ENCODE measurements at regions of chr2 and their contacts with region 1.

Region 1: GRCh38 chr2:177263451-177264208 is 897 bp downstream of the NFE2L2 start:
- DNase-seq: peak; percentile 95
- ATAC-seq: peak; percentile 68
- H3K4me3 Mint-ChIP-seq: peak overlapping the region; percentile 86
- H3K27ac Mint-ChIP-seq: peak overlapping the region; percentile 100
- H3K4me1 Mint-ChIP-seq: peaks cover 52% of the 10 kb centered on the region
- H3K27me3 Mint-ChIP-seq: no peaks in the 10 kb centered on the region

Region 2: GRCh38 chr2:177212106-177212890 is 51.3 kb before region 1 on chr2 and contains the start of gene HNRNPA3:
- CTCF ChIA-PET with region 1: interaction called, 11 read pairs
- POLR2A ChIA-PET with region 1: interaction called, 84 read pairs
- DNase-seq: peak; percentile 100
- ATAC-seq: peak; percentile 88
- H3K4me3 Mint-ChIP-seq: peak within 1 kb of the TSS; percentile 92
- H3K27ac Mint-ChIP-seq: peak within 1 kb of the TSS; percentile 99
- H3K4me1 Mint-ChIP-seq: peaks cover 42% of the 10 kb centered on the region
- H3K27me3 Mint-ChIP-seq: no peaks in the 10 kb centered on the region
- total RNA-seq, gene HNRNPA3: 329 to 350 TPM

Region 3: GRCh38 chr2:177239932-177240630 is 23.5 kb before region 1 on chr2:
- CTCF ChIA-PET with region 1: interaction called, 44 read pairs
- POLR2A ChIA-PET with region 1: interaction called, 53 read pairs
- DNase-seq: peak; percentile 64
- ATAC-seq: peak; percentile 86
- H3K4me3 Mint-ChIP-seq: peak overlapping the region; percentile 25
- H3K27ac Mint-ChIP-seq: peak overlapping the region; percentile 88
- H3K4me1 Mint-ChIP-seq: peaks cover 68% of the 10 kb centered on the region
- H3K27me3 Mint-ChIP-seq: no peaks in the 10 kb centered on the region

Region 4: DNA sequence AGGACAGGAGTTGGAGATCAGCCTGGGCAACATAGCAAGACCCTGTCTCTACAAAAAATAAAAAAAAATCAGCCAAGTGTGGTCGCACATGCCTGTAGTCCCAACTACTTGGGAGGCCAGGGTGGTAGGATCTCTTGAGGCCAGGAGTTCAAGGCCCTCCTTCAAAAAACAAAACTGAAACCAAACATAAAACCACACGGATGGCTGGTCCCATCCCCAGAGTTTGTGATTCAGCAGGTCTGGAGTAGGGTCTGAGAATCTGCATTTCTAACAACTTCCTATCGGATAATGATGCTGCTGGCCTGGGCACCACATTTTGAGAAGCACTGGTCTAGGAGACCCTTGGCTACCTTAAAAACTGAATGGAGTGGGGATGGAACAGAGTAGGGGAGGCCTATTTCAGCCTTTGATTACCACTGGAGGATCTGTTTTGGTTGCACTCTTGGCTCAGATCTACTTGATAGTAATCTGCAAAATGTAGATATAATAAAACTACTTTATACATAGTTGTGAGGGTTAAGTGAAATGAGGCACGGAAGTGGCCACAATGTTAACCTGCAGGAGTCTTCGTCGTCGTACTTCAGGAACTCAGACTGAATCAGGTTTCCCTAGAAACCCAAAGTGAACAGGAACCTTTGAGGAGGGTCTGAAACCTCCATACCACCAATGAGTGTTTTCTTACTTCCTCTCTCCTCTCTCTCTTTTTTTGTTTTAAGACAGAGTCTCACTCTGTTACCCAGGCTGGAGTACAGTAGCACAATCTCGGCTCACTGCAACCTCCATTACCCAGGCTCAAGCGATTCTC is 26.4 kb after region 1 on chr2:
- CTCF ChIA-PET with region 1: interaction called, 140 read pairs
- POLR2A ChIA-PET with region 1: interaction called, 143 read pairs
- DNase-seq: peak; percentile 58
- ATAC-seq: peak; percentile 76
- H3K4me3 Mint-ChIP-seq: peak overlapping the region; percentile 56
- H3K27ac Mint-ChIP-seq: peak overlapping the region; percentile 94
- H3K4me1 Mint-ChIP-seq: peaks cover 72% of the 10 kb centered on the region
- H3K27me3 Mint-ChIP-seq: no peaks in the 10 kb centered on the region

Region 5: DNA sequence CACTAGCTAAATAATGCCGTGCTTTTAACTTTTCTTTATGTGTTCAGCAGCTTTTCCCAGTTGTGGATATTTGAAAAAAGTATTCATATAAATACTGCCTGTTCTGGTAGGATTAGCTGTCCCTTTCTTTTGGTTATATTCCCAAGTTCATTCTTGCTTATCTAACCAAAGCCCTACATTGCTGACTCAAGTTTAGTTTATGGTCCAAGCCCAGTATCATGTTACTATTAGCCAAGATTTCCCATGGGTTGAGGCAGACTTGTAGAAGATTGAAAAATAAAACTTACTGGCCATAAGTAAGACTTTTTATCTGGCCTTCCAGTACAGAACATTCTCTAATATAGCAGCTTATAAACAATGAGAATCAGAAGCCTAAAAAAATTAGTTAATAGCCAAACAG is 50.6 kb after region 1 on chr2:
- CTCF ChIA-PET with region 1: interaction called, 30 read pairs
- POLR2A ChIA-PET with region 1: interaction called, 42 read pairs
- DNase-seq: no peak
- ATAC-seq: no peak
- H3K4me3 Mint-ChIP-seq: no peak overlapping the region
- H3K27ac Mint-ChIP-seq: no peak overlapping the region
- H3K4me1 Mint-ChIP-seq: peaks cover 20% of the 10 kb centered on the region
- H3K27me3 Mint-ChIP-seq: no peaks in the 10 kb centered on the region

Region 6: GRCh38 chr2:177392373-177393202 is 129.0 kb after region 1 on chr2 and contains the start of gene AGPS:
- CTCF ChIA-PET with region 1: interaction called, 6 read pairs
- POLR2A ChIA-PET with region 1: interaction called, 25 read pairs
- DNase-seq: peak; percentile 86
- ATAC-seq: peak; percentile 96
- H3K4me3 Mint-ChIP-seq: peak within 1 kb of the TSS; percentile 88
- H3K27ac Mint-ChIP-seq: peak within 1 kb of the TSS; percentile 93
- H3K4me1 Mint-ChIP-seq: peaks cover 52% of the 10 kb centered on the region
- H3K27me3 Mint-ChIP-seq: no peaks in the 10 kb centered on the region
- total RNA-seq, gene AGPS: 65.9 to 67.9 TPM

Measured in activated CD8-positive, alpha-beta T cell treated with anti-CD3 and anti-CD28 coated beads, Interleukin-2, amount 10 ng/mL, durations not matched to agents 7 days and 5 days (primary cell).